ENCODE measurements at regions of chr20 and their contacts with region 1.

Region 1: DNA sequence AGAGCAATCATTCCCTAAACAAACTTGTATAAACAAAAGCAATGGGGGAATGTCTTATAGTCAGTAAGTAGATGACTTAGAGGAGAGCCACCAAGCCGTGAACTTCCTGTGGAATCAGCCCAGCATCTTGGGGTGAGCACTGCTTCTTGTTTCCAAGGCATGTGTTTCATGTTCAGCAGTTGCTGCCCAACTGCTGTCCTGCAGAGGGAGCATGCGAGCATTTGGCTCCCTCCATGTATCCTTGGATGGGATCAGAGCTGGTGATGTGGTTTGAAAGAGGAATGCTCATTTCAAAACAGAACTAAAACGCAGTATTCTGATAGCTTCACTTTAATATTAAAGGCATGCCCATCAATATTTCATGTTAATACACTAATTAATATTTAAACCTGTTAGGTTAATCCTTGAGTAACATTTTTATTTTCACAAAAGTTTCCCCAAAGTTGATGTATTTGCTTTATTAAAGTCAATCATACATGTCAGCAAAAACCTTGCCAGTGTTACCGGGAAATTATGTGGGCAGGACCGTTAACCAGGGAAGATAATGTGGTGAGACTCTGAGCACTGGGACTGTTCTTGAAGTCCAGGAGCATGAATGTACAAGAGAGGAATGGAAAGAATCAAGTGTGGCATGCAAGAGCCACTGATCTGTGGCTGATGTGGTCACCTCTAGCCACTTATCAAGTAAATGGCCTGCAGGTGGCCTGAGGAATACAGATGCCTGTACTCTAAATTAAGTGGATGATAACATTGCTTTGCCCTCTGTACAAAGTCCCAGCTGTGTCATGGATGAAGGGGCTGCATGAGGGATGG is 172.2 kb upstream of the GGTLC1 start:
- DNase-seq: peak; percentile 68
- H3K4me3 ChIP-seq: no peak overlapping the region
- H3K27ac ChIP-seq: no peak overlapping the region
- H3K4me1 ChIP-seq: no peaks in the 10 kb centered on the region
- H3K27me3 ChIP-seq: no peaks in the 10 kb centered on the region
- CTCF ChIP-seq: peak; percentile 88

Region 2: DNA sequence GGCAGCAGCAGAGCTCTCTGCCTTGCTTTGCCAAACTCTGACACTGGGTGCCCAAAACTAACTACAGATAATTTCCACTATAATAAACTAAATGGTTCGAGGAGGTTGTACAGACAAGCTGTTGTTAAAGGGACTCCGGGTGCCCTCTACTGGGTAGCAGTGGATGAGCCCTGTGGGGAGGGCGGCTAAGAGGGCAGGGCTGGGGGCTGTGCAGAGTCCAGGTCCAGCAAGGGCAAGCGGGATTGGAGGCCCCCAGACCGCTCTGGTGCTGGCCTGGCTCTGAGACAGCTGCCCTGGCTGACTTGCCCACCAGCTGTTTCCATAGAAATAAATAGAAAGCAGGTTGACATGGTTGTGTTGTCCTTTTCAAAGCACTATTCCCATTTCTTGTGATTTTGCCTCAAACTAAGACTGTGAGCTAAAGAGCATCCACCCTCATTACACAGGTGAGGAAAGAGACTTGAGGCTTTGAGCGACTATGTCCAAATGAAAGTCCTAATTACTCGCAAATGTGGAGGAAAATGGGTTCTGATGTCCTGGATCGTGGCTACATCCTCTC is 620.7 kb after region 1 on chr20:
- CTCF ChIA-PET with region 1: interaction called, 3 read pairs
- POLR2A ChIA-PET with region 1: no interaction called
- intact Hi-C with region 1: loop called (anchors 5 kb)
- DNase-seq: peak; percentile 79
- H3K4me3 ChIP-seq: no peak overlapping the region
- H3K27ac ChIP-seq: peak overlapping the region; percentile 59
- H3K4me1 ChIP-seq: peaks cover 34% of the 10 kb centered on the region
- H3K27me3 ChIP-seq: no peaks in the 10 kb centered on the region
- CTCF ChIP-seq: peak; percentile 83

Measured in A673 (cell line).